Naive thymus-derived CD4-positive, alpha-beta T cell (primary cell): ENCODE measurements at regions of chrX and their contacts with region 1.

Region 1: GRCh38 chrX:120664081-120664480 is 34.2 kb upstream of the C1GALT1C1 start:
- DNase-seq: peak in 5 of 9 donors; percentile 22 to 36 (median 33)
- ATAC-seq: no peak
- H3K4me3 ChIP-seq: no peak overlapping the region
- H3K4me3 Mint-ChIP-seq: no peak overlapping the region
- H3K27ac ChIP-seq: no peak overlapping the region
- H3K27ac Mint-ChIP-seq: peak overlapping the region in 2 of 9 donors; percentile 17 to 71
- H3K4me1 ChIP-seq: no peaks in the 10 kb centered on the region
- H3K4me1 Mint-ChIP-seq: peaks cover 0 to 7% (median 0%) of the 10 kb centered on the region in 7 donors
- H3K27me3 ChIP-seq: no peaks in the 10 kb centered on the region
- H3K27me3 Mint-ChIP-seq: no peaks in the 10 kb centered on the region

Region 2: GRCh38 chrX:120334151-120334550 is 329.9 kb before region 1 on chrX:
- CTCF ChIA-PET with region 1: no interaction called
- POLR2A ChIA-PET with region 1: no interaction called
- intact Hi-C with region 1: loop called in 1 of 2 experiments (anchors 1 kb)
- DNase-seq: peak in 1 of 9 donors; percentile 5
- ATAC-seq: no peak
- H3K4me3 ChIP-seq: no peak overlapping the region
- H3K4me3 Mint-ChIP-seq: no peak overlapping the region
- H3K27ac ChIP-seq: no peak overlapping the region
- H3K27ac Mint-ChIP-seq: no peak overlapping the region
- H3K4me1 ChIP-seq: no peaks in the 10 kb centered on the region
- H3K4me1 Mint-ChIP-seq: peaks cover 0 to 1% (median 0%) of the 10 kb centered on the region in 7 donors
- H3K27me3 ChIP-seq: no peaks in the 10 kb centered on the region
- H3K27me3 Mint-ChIP-seq: peaks cover 0 to 7% (median 0%) of the 10 kb centered on the region in 5 donors

Region 3: DNA sequence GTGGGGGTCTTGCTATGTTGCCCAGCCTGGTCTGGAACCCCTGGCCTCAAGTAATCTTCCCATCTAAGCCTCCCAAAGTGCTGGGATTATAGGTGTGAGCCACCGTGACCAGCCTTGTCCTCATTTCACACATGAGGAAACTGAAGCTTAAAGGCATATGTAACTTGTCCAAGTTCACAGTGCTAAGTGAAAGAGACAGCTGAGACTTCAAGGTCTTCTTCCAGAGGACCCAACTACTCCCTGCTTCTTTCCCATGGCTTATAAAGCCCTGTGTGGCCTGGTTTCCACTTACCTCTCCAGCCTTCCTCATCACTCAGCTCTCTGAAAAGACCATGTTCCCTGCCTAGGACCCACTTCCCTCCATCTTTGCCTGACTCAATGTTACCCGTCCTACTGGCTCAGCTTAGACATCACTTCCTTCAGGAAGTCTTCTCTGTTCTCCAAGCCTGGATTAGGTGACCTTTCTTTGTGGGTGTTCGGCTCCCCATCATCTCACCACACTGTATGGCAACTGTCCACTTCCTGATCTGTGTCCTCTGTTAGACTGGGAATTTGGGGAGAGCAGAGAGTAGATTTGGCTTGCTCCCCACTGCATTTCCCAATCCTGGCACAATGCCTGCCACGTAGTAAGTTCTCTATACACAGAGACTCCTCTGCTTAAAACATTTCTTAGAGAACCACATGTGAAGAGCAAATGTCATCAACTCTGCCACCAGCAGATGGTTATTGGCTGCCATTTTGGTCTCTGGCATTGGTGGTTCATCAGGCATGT is 164.6 kb before region 1 on chrX:
- CTCF ChIA-PET with region 1: interaction called, 15 read pairs
- POLR2A ChIA-PET with region 1: no interaction called
- intact Hi-C with region 1: loop called (anchors 1 kb)
- DNase-seq: no peak
- ATAC-seq: no peak
- H3K4me3 ChIP-seq: no peak overlapping the region
- H3K4me3 Mint-ChIP-seq: no peak overlapping the region
- H3K27ac ChIP-seq: no peak overlapping the region
- H3K27ac Mint-ChIP-seq: peak overlapping the region in 1 of 9 donors; percentile 1
- H3K4me1 ChIP-seq: no peaks in the 10 kb centered on the region
- H3K4me1 Mint-ChIP-seq: peaks cover 5 to 11% (median 6%) of the 10 kb centered on the region in 7 donors
- H3K27me3 ChIP-seq: no peaks in the 10 kb centered on the region
- H3K27me3 Mint-ChIP-seq: peaks cover 0 to 5% (median 0%) of the 10 kb centered on the region in 5 donors

Region 4: DNA sequence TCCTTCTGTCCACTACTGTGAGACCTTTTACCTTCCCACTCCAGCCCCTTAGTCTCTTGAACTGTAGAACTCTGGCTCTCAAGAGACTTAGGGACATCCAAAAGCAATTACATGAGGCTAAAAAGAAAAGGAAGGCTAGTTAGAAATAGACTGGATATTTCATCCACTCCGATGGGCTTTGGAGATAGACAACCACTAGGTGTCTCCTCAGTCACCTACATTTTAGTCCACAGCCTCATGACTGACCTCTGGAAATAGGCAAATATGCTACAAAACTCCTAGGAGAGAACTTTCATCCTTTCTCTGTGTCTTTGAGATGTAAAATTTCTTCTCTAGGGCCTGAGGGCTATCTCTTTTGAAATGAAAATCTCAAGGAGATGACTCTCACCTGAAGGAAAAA is 149.8 kb before region 1 on chrX:
- CTCF ChIA-PET with region 1: no interaction called
- POLR2A ChIA-PET with region 1: no interaction called
- intact Hi-C with region 1: loop called in 1 of 2 experiments (anchors 5 kb)
- DNase-seq: no peak
- ATAC-seq: no peak
- H3K4me3 ChIP-seq: no peak overlapping the region
- H3K4me3 Mint-ChIP-seq: no peak overlapping the region
- H3K27ac ChIP-seq: no peak overlapping the region
- H3K27ac Mint-ChIP-seq: peak overlapping the region in 2 of 9 donors; percentile 38 to 65
- H3K4me1 ChIP-seq: no peaks in the 10 kb centered on the region
- H3K4me1 Mint-ChIP-seq: peaks cover 0 to 5% (median 0%) of the 10 kb centered on the region in 7 donors
- H3K27me3 ChIP-seq: no peaks in the 10 kb centered on the region
- H3K27me3 Mint-ChIP-seq: no peaks in the 10 kb centered on the region

Region 5: DNA sequence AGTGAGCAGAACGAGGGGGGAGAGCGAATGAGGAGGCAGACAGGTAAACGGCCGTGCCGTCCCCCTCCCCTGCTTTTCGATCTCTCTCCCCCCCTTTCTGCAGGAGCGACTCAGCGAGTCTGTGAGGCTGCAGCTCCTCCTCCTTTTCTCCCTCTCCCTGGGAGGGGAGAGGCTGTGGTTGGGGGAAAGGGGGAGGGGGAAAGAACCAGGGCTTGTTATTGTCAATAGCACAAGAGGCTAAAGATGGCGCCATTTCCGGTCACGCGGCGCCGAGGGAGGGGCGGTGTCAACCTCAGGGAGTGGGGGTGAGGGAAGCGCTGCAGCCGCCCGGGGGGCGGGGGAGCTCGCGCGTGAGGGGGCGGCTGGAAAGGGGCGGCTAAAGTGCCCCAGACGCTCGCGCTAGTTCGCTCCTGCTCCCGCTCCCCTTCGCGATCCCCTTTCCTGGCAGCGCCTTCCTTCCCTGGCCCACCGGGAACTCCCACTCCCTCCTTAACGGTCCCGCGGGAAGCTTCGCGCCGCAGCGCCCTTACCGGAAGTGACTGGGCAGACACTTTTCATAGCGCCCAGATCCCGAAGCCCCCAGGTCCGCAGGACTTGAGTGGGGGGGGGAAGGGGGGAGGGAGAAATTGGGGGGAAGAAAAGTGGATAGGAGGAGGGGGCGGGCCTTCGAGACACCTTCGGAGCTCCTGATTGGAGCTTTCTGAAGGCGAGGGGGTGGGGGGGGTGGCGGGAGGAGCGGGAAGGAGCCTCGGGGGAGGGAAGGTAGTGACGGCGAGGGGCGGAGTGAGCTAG is 103.0 kb before region 1 on chrX and contains the start of gene CUL4B:
- CTCF ChIA-PET with region 1: no interaction called
- POLR2A ChIA-PET with region 1: interaction called, 5 read pairs
- intact Hi-C with region 1: loop called in 1 of 2 experiments (anchors 1 kb)
- DNase-seq: peak; percentile 73 to 95 (median 92)
- ATAC-seq: peak; percentile 96
- H3K4me3 ChIP-seq: peak within 1 kb of the TSS; percentile 87
- H3K4me3 Mint-ChIP-seq: peak within 1 kb of the TSS; percentile 87 to 99 (median 98)
- H3K27ac ChIP-seq: peak within 1 kb of the TSS; percentile 100
- H3K27ac Mint-ChIP-seq: peak within 1 kb of the TSS; percentile 88 to 100 (median 95)
- H3K4me1 ChIP-seq: peaks cover 0 to 3% of the 10 kb centered on the region in 2 donors
- H3K4me1 Mint-ChIP-seq: peaks cover 6 to 32% (median 26%) of the 10 kb centered on the region in 7 donors
- H3K27me3 ChIP-seq: no peaks in the 10 kb centered on the region
- H3K27me3 Mint-ChIP-seq: no peaks in the 10 kb centered on the region
- total RNA-seq, gene CUL4B: 34.9 to 67.7 (median 43.0) TPM

Region 6: DNA sequence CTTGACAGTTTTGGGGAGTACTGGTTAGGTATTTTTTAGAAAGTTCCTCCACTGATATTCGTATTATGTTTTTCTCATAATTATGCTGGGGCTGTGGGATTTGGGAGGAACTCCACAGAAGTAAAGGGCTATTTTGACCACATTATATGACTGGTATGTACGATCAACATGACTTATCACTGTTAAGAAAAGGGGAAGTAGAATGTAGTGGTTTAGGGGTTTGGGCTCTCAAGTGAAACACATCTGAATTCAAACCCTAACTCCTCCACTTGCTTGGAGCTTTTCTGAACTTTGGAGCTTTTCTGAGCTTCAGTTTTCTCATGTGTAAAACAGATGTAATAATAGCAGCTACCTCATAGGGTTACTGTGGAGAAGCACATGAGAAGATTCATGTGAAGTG is 62.2 kb after region 1 on chrX:
- CTCF ChIA-PET with region 1: no interaction called
- POLR2A ChIA-PET with region 1: no interaction called
- intact Hi-C with region 1: no loop called
- DNase-seq: no peak
- ATAC-seq: peak; percentile 41
- H3K4me3 ChIP-seq: no peak overlapping the region
- H3K4me3 Mint-ChIP-seq: no peak overlapping the region
- H3K27ac ChIP-seq: no peak overlapping the region
- H3K27ac Mint-ChIP-seq: no peak overlapping the region
- H3K4me1 ChIP-seq: no peaks in the 10 kb centered on the region
- H3K4me1 Mint-ChIP-seq: peaks cover 0 to 5% (median 0%) of the 10 kb centered on the region in 7 donors
- H3K27me3 ChIP-seq: no peaks in the 10 kb centered on the region
- H3K27me3 Mint-ChIP-seq: no peaks in the 10 kb centered on the region

Region 7: GRCh38 chrX:120769576-120770341 is 105.7 kb after region 1 on chrX:
- CTCF ChIA-PET with region 1: no interaction called
- POLR2A ChIA-PET with region 1: no interaction called
- intact Hi-C with region 1: loop called (anchors 1 kb)
- DNase-seq: peak in 4 of 9 donors; percentile 5 to 39 (median 34)
- ATAC-seq: no peak
- H3K4me3 ChIP-seq: no peak overlapping the region
- H3K4me3 Mint-ChIP-seq: no peak overlapping the region
- H3K27ac ChIP-seq: no peak overlapping the region
- H3K27ac Mint-ChIP-seq: no peak overlapping the region
- H3K4me1 ChIP-seq: no peaks in the 10 kb centered on the region
- H3K4me1 Mint-ChIP-seq: peaks cover 0 to 11% (median 0%) of the 10 kb centered on the region in 7 donors
- H3K27me3 ChIP-seq: no peaks in the 10 kb centered on the region
- H3K27me3 Mint-ChIP-seq: no peaks in the 10 kb centered on the region